ENCODE measurements at regions of chr11 and their contacts with region 1.

Region 1: DNA sequence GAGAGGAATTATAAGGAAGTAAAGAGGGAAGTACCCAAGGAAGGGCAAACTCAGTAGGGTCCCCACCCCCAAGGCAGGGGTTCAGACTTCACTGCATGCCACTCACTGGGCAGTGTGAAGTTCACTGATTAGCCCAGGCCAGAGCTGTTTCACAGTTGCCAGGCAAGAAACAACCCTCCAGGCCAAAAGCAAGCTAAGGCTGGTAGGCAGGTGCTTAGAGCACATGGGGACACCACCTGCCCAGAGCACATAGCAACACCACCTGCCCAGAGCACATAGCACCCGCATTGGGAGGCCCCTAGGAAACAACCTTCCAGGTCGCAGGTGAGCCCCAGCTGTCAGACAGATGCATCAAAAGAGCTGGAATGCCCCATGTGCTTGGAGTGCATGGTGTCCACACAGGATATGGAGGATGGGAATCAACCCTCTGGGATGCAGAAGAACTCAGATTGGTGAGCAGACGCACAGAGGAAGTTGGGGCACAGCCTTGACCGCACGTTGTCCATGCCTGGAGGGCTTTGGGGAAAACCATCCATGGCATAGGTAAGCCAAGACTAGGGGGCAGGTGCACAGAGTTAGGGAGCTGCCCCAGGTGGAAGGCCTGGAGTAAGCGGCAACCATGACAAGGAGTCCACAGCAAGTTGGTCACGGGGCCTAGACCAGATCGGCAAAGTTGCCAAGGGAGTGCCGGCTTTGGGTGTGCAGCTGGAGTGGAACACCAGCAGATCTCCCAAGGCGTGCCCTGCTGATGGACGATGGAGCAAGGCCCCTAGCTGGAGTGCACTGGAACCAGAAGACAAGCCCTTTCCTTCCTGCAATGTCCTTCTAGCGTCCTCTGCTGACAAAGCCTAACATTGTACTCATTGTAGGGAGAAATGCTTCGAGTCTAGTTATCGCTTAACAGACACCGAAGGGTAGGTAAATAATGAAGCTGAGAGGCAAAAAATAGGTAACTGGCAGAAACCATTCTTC is 7.8 kb upstream of the TMEM216 start:
- DNase-seq: no peak
- H3K4me3 Mint-ChIP-seq: no peak overlapping the region
- H3K27ac Mint-ChIP-seq: no peak overlapping the region
- H3K4me1 Mint-ChIP-seq: peaks cover 6% of the 10 kb centered on the region
- H3K27me3 Mint-ChIP-seq: no peaks in the 10 kb centered on the region

Region 2: DNA sequence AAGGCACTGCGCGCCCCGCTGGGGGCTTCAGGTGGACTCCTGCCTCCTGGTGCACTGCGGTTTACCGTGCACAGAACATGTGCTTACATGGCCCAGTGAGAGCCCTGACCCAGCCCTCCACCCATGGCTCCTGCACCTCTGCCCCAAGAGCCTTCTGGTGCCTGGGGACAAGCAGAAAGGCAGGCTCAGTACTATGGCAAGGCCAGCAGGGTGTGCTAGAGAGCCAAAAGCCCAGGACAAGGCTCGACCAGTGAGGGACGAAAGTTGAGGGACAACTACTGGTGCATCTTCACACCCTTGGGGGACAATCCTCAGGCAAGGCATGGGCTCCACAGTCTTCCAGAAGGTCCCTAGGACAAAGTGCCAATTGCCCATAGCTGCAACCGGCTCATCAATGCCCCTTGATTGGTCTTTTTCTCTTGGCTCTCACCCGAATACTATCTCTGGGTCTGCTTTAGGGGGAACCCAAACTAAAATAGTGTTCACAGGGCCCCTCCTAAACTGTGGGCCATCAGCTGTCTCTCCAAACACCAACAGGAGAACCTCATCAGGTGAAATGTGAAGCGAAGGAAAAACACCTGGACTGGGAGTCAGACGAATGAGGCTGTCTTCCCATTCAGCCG is 130.0 kb before region 1 on chr11:
- CTCF ChIA-PET with region 1: interaction called, 65 read pairs
- DNase-seq: peak; percentile 80
- H3K4me3 Mint-ChIP-seq: no peak overlapping the region
- H3K27ac Mint-ChIP-seq: no peak overlapping the region
- H3K4me1 Mint-ChIP-seq: no peaks in the 10 kb centered on the region
- H3K27me3 Mint-ChIP-seq: peaks cover 5% of the 10 kb centered on the region

Region 3: GRCh38 chr11:61315260-61315659 is 69.3 kb before region 1 on chr11:
- CTCF ChIA-PET with region 1: interaction called, 10 read pairs
- DNase-seq: no peak
- H3K4me3 Mint-ChIP-seq: no peak overlapping the region
- H3K27ac Mint-ChIP-seq: no peak overlapping the region
- H3K4me1 Mint-ChIP-seq: no peaks in the 10 kb centered on the region
- H3K27me3 Mint-ChIP-seq: no peaks in the 10 kb centered on the region

Region 4: DNA sequence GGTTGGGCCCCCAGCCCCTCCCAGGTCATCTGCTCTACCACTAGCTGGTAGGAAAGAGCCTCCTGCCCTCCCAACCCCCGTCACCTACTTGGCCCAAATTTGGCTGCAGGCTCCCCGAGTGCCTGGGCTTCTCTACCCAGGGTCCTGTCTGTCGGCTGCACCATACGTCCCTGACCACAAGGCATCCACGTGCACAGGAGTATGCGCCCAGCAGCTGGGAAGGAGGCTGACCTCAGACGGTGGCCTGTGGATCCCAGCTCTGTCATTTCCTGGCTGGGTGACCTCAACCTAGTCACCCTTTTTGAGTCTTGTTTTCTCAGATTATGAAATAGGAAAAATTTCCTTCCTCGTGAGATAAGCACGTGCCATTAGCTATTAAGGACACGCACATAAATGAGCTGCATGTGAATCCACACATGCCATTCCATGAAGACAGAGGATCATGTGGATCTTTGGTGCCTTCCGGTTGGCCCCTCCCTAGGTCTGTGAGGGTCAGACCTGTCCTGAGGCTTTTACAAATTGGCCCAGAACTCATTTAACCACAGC is 36.6 kb before region 1 on chr11:
- CTCF ChIA-PET with region 1: interaction called, 10 read pairs
- DNase-seq: no peak
- H3K4me3 Mint-ChIP-seq: no peak overlapping the region
- H3K27ac Mint-ChIP-seq: no peak overlapping the region
- H3K4me1 Mint-ChIP-seq: no peaks in the 10 kb centered on the region
- H3K27me3 Mint-ChIP-seq: no peaks in the 10 kb centered on the region

Region 5: GRCh38 chr11:61369372-61370219 is 15.0 kb before region 1 on chr11:
- CTCF ChIA-PET with region 1: interaction called, 46 read pairs
- DNase-seq: no peak
- H3K4me3 Mint-ChIP-seq: no peak overlapping the region
- H3K27ac Mint-ChIP-seq: no peak overlapping the region
- H3K4me1 Mint-ChIP-seq: peaks cover 7% of the 10 kb centered on the region
- H3K27me3 Mint-ChIP-seq: no peaks in the 10 kb centered on the region